Sciatic nerve (tissue), 2 donors: ENCODE measurements at regions of chr13 and their contacts with region 1.

Region 1: DNA sequence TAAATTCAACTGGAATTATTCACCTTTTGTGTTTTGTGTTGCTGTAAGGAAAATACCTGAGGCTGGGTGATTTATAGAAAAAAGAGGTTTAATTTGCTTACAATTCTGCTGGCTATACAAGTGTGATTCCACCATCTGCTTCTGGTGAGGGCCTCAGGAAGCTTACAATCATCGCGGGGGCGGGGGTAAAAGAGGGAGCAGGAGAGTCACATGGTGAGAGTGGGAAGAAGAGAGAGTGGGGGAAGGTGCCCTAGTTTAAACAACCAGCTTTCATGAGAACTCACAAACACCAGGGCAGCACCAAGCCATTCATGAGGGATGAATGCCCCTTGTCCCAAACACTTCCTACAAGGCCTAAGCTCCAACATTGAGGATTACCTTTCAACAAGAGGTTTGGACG is 760.7 kb upstream of the PCDH9 start:
- DNase-seq: no peak
- ATAC-seq: no peak

Region 2: DNA sequence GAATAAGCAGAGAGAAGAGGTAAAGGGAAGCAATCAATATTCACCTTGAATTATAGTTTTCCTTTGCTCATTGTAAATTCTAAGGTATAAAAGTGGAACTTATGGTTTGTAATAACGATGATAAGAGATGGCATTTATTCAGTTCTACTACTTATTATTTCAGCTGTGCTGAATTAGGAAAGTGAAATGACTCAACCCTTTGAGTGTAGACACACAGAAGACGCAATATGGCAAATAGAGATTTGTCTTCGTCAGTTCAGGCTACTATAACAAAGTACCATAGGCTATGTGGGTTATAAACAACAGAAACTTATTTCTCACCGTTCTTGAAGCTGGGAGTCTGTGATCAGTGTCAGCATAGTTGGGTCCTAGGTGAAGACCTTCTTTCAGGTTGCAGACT is 47.8 kb before region 1 on chr13:
- intact Hi-C with region 1: no loop called
- DNase-seq: no peak
- ATAC-seq: no peak

Region 3: DNA sequence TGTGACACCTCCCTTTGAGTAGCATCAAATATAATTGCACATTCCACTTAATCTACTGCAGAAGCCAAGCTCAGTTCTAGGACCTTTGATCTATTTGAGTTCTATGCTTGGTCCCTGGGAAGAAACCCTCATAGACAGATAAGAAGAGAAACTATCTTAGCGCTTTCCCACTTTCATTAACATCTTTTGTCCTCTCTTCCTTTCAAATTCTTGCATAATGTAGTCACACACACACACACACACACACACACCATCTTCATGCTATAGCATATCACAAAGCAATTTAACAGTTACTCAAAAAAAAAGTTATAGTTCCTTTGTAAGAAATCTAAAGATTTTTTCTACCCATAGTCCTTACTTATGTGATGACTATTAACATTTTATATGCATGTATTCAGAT is 24.8 kb before region 1 on chr13:
- intact Hi-C with region 1: loop called (anchors 1 kb)
- DNase-seq: no peak
- ATAC-seq: no peak

Region 4: GRCh38 chr13:68023838-68024581 is 33.1 kb after region 1 on chr13:
- intact Hi-C with region 1: loop called (anchors 2 kb)
- DNase-seq: no peak
- ATAC-seq: no peak

Region 5: DNA sequence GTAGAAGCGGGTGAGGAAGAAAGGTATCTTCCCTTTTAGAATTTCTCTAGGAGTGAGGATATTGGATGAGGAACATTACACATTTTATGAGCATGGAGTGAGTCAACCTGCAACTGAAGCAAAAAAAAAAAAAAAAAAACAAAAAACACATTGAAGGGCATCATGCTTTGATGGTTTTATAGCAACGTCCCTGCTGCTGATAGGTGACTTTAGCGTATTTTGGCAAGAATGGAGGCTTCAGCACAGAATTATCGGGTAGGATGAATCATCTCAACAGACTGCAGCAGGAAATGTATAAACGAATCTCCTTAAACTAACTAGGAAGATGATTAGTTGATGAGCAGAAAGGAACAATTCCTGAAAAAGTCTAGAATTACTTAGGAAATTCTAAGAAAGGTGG is 757.2 kb after region 1 on chr13:
- intact Hi-C with region 1: loop called (anchors 5 kb)
- DNase-seq: no peak
- ATAC-seq: no peak